IMR-90 (cell line): ENCODE measurements at regions of chr11 and their contacts with region 1.

Region 1: GRCh38 chr11:119850822-119851409 is 121.9 kb upstream of the NECTIN1 start:
- DNase-seq: no peak
- ATAC-seq: no peak
- H3K4me3 ChIP-seq: no peak overlapping the region
- H3K27ac ChIP-seq: no peak overlapping the region
- H3K4me1 ChIP-seq: no peaks in the 10 kb centered on the region
- H3K27me3 ChIP-seq: peaks cover 9% of the 10 kb centered on the region; the same call in 1 of the 2 replicates
- CTCF ChIP-seq: no peak
- POLR2A ChIP-seq: no peak
- RAD21 ChIP-seq: no peak

Region 2: GRCh38 chr11:119460582-119460981 is 390.3 kb before region 1 on chr11:
- CTCF ChIA-PET with region 1: no interaction called
- POLR2A ChIA-PET with region 1: no interaction called
- dilution Hi-C with region 1: no loop called
- in situ Hi-C with region 1: no loop called
- intact Hi-C with region 1: no loop called
- DNase-seq: peak; percentile 97
- ATAC-seq: peak; percentile 88
- H3K4me3 ChIP-seq: no peak overlapping the region
- H3K27ac ChIP-seq: peak overlapping the region; percentile 93
- H3K4me1 ChIP-seq: peaks cover 21% of the 10 kb centered on the region
- H3K27me3 ChIP-seq: no peaks in the 10 kb centered on the region
- CTCF ChIP-seq: no peak
- POLR2A ChIP-seq: no peak
- RAD21 ChIP-seq: 0 out of 2 replicates have a peak, but pooled peaks have one; percentile 14

Region 3: GRCh38 chr11:119518746-119519730 is 331.9 kb before region 1 on chr11:
- CTCF ChIA-PET with region 1: no interaction called
- POLR2A ChIA-PET with region 1: interaction called, 14 read pairs
- dilution Hi-C with region 1: no loop called
- in situ Hi-C with region 1: no loop called
- intact Hi-C with region 1: no loop called
- DNase-seq: peak; percentile 58
- ATAC-seq: peak; percentile 40; the same call in 1 of the 2 replicates
- H3K4me3 ChIP-seq: no peak overlapping the region
- H3K27ac ChIP-seq: no peak overlapping the region
- H3K4me1 ChIP-seq: no peaks in the 10 kb centered on the region
- H3K27me3 ChIP-seq: peaks cover 41% of the 10 kb centered on the region
- CTCF ChIP-seq: no peak
- POLR2A ChIP-seq: no peak
- RAD21 ChIP-seq: no peak

Region 4: GRCh38 chr11:119863851-119864601 is 13.1 kb after region 1 on chr11:
- CTCF ChIA-PET with region 1: no interaction called
- POLR2A ChIA-PET with region 1: no interaction called
- dilution Hi-C with region 1: no loop called
- in situ Hi-C with region 1: no loop called
- intact Hi-C with region 1: no loop called
- DNase-seq: no peak
- ATAC-seq: no peak
- H3K4me3 ChIP-seq: no peak overlapping the region
- H3K27ac ChIP-seq: no peak overlapping the region
- H3K4me1 ChIP-seq: no peaks in the 10 kb centered on the region
- H3K27me3 ChIP-seq: peaks cover 21% of the 10 kb centered on the region; the same call in 1 of the 2 replicates
- CTCF ChIP-seq: no peak
- POLR2A ChIP-seq: no peak
- RAD21 ChIP-seq: no peak

Region 5: GRCh38 chr11:119952441-119952840 is 101.5 kb after region 1 on chr11:
- CTCF ChIA-PET with region 1: no interaction called
- POLR2A ChIA-PET with region 1: no interaction called
- dilution Hi-C with region 1: no loop called
- in situ Hi-C with region 1: no loop called
- intact Hi-C with region 1: no loop called
- DNase-seq: no peak
- ATAC-seq: no peak
- H3K4me3 ChIP-seq: no peak overlapping the region
- H3K27ac ChIP-seq: no peak overlapping the region
- H3K4me1 ChIP-seq: no peaks in the 10 kb centered on the region
- H3K27me3 ChIP-seq: peaks cover 6% of the 10 kb centered on the region; the same call in 1 of the 2 replicates
- CTCF ChIP-seq: no peak
- POLR2A ChIP-seq: no peak
- RAD21 ChIP-seq: no peak